ENCODE measurements at regions of chr5 and their contacts with region 1.

Region 1: GRCh38 chr5:179821581-179822432 is 1.1 kb downstream of the SQSTM1 start:
- DNase-seq: peak; percentile 89
- ATAC-seq: peak; percentile 48
- H3K4me3 ChIP-seq: peak overlapping the region; percentile 22 to 94 (median 81)
- H3K4me3 Mint-ChIP-seq: peak overlapping the region; percentile 98
- H3K27ac ChIP-seq: peak overlapping the region; percentile 91 to 98
- H3K27ac Mint-ChIP-seq: peak overlapping the region; percentile 98
- H3K4me1 ChIP-seq: peaks cover 36 to 47% of the 10 kb centered on the region in 2 donors
- H3K4me1 Mint-ChIP-seq: peaks cover 55% of the 10 kb centered on the region
- H3K27me3 ChIP-seq: peaks cover 0 to 4% (median 0%) of the 10 kb centered on the region in 4 experiments
- H3K27me3 Mint-ChIP-seq: no peaks in the 10 kb centered on the region
- CTCF ChIP-seq: no peak

Region 2: GRCh38 chr5:179550511-179551230 is 271.1 kb before region 1 on chr5 and contains the start of gene RUFY1:
- CTCF ChIA-PET with region 1: no interaction called
- POLR2A ChIA-PET with region 1: no interaction called
- intact Hi-C with region 1: loop called (anchors 5 kb)
- DNase-seq: peak; percentile 92
- ATAC-seq: peak; percentile 74
- H3K4me3 ChIP-seq: peak within 1 kb of the TSS; percentile 60 to 92 (median 76)
- H3K4me3 Mint-ChIP-seq: peak within 1 kb of the TSS; percentile 99
- H3K27ac ChIP-seq: peak within 1 kb of the TSS; percentile 90 to 92
- H3K27ac Mint-ChIP-seq: peak within 1 kb of the TSS; percentile 100
- H3K4me1 ChIP-seq: peaks cover 25 to 31% of the 10 kb centered on the region in 2 donors
- H3K4me1 Mint-ChIP-seq: peaks cover 50% of the 10 kb centered on the region
- H3K27me3 ChIP-seq: no peaks in the 10 kb centered on the region
- H3K27me3 Mint-ChIP-seq: no peaks in the 10 kb centered on the region
- CTCF ChIP-seq: no peak
- total RNA-seq, gene RUFY1: 99.8 and 109 TPM in 2 replicates